Activated CD4-positive, alpha-beta T cell treated with anti-CD3 and anti-CD28 coated beads for 36 hours (primary cell): ENCODE measurements at regions of chr15 and their contacts with region 1.

Region 1: DNA sequence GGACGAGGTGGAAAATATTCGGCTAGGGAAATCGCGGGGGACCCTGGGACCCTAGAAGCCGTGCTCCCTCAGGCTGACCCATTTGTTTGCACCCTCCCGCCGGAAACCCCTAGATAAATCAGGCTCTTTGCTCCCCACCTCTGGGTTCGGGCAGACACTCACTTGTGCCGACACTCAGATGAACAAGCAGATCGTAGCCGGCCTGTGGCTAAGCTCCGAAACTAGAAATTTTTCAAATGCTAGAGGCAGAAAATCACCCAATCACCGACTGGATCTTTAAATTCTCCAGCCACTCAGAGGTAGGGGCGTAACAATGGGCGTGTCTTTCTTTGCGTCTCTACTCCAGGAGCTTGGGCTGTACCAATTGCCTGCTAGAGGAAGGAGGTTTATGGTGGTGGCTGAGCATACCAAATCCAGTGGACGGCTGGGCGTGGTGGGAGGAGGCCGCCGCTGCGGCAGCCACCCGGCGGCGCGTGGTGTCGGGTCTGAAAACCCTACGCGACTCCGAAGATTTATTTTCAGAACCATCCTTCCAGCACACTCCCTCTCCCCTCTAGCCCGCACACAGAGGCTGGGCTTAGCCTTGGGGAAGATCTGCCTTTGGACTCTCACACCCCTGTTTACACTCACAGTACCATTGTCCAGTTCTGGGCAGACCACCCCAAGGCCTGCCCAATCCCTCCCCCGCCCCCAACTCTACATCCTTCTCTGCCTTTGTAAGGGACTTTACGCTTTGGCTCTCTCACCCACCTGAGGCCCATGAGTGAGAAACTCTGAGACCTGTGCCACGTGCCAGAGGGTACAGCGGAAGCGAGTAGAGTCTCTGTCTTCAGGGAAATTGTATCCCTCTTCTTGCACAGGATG is at the start of gene PIF1:
- DNase-seq: peak; percentile 92
- ATAC-seq: peak; percentile 94
- H3K4me3 Mint-ChIP-seq: peak within 1 kb of the TSS; percentile 87
- H3K27ac Mint-ChIP-seq: peak within 1 kb of the TSS; percentile 93
- H3K4me1 Mint-ChIP-seq: peaks cover 23% of the 10 kb centered on the region
- H3K27me3 Mint-ChIP-seq: peaks cover 6% of the 10 kb centered on the region
- total RNA-seq, gene PIF1: 30.0 to 36.3 TPM

Region 2: DNA sequence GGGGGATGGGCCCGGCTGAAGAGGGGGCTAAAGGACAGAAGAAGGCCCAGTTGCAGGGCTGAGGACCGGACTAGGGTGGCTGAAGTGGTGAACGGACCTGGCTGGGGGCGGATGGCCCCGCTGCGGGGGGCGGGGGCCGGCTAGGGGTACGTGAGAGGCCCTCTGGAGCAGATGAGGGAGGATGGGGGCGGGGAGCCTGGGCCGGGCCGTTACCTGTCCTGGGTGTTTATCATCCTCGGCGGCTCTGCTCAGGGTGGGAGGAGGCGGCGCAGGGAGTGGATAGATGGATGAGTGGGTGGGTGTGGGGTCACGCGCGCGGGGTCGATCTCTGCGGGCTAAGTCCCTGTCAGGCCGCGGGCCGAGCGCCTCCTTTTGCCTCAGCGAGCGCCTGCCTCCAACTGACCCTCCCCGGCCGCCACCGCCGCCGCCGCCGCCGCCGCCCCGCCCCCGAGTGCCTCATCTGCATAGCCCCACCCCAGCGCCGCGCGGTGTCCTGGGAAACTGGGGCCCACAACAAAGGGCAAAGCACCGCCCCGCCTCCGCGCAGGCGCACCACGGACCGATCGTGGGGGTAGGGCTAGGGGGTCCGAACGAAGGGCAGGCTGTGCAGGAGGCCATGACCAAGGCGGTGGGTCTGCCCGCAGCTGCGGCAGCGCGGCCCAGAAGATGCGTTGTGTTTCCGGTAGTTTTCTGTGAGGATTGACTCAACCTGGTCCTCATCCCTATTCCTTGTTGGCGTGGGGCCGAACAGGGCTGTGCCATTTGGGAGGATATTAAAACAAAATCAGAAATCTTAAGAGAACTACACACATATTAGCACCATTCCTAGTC is 122.6 kb before region 1 on chr15:
- CTCF ChIA-PET with region 1: no interaction called
- POLR2A ChIA-PET with region 1: no interaction called
- intact Hi-C with region 1: loop called in 1 of 2 experiments (anchors 1 kb)
- DNase-seq: peak; percentile 98
- ATAC-seq: peak; percentile 91
- H3K4me3 Mint-ChIP-seq: peak overlapping the region; percentile 72
- H3K27ac Mint-ChIP-seq: peak overlapping the region; percentile 86
- H3K4me1 Mint-ChIP-seq: peaks cover 52% of the 10 kb centered on the region
- H3K27me3 Mint-ChIP-seq: no peaks in the 10 kb centered on the region

Region 3: GRCh38 chr15:64836023-64836536 is 10.4 kb after region 1 on chr15:
- CTCF ChIA-PET with region 1: interaction called, 17 read pairs
- POLR2A ChIA-PET with region 1: no interaction called
- intact Hi-C with region 1: loop called (anchors 1 kb)
- DNase-seq: no peak
- ATAC-seq: peak; percentile 4
- H3K4me3 Mint-ChIP-seq: peak overlapping the region; percentile 56
- H3K27ac Mint-ChIP-seq: peak overlapping the region; percentile 30
- H3K4me1 Mint-ChIP-seq: peaks cover 43% of the 10 kb centered on the region
- H3K27me3 Mint-ChIP-seq: no peaks in the 10 kb centered on the region

Region 4: DNA sequence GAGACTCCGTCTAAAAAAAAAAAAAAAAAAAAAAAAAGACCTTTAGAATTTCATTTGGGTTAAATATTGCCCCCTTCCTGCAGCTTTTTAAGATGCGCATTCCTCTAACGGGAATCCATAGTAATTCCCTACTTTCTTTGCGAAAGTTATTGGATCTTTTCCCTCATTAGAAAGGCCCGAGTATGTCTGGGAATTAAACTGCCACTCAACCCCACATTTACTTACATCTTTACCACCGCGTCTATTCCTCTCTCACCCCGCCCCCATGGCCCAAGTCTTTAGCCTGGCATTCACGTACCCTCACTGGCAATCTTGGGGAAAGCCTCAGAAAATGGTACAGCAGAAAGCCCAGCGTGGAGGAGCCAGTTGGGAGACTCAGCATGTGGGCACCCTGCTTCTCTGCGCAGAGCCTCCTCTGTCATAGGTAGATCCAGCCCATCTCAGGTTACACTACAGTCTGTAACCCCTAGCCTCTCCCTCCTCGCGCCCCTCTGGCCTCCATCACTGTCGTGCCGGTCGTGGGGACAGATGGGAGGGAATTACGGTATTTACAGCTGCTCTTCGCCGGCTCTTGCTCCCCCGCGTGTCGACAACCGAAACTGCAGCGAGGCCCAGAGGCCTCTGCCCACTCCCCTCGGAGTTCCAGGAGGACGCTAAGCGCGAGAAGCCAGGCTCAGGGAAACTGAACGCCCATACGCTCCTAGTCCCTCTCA is 79.6 kb after region 1 on chr15:
- CTCF ChIA-PET with region 1: interaction called, 5 read pairs
- POLR2A ChIA-PET with region 1: no interaction called
- intact Hi-C with region 1: loop called in 1 of 2 experiments (anchors 1 kb)
- DNase-seq: peak; percentile 91
- ATAC-seq: peak; percentile 87
- H3K4me3 Mint-ChIP-seq: peak overlapping the region; percentile 67
- H3K27ac Mint-ChIP-seq: peak overlapping the region; percentile 87
- H3K4me1 Mint-ChIP-seq: peaks cover 34% of the 10 kb centered on the region
- H3K27me3 Mint-ChIP-seq: peaks cover 6% of the 10 kb centered on the region

Region 5: DNA sequence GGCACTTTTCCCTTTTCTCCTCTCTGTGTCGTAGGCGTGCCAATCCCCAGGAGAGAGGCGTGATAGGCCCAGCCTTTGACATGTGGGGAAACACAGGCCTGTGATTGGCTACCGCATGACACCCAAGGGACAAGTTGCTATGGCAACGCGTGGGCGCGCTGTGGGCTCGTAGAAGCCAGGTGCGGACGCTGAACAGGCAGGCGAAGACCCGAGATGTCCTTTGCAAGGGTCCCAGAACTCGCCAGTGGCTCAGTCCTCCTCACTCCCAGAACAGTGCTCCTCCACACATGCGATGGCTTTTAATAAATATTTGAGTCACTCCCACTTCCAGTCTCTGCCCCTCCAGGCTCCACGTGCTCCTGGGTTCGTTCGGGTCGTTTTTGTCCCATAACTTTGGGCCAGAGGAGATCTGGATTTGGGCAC is 223.8 kb after region 1 on chr15:
- CTCF ChIA-PET with region 1: no interaction called
- POLR2A ChIA-PET with region 1: no interaction called
- intact Hi-C with region 1: loop called in 1 of 2 experiments (anchors 1 kb)
- DNase-seq: peak; percentile 94
- ATAC-seq: peak; percentile 98
- H3K4me3 Mint-ChIP-seq: peak overlapping the region; percentile 8
- H3K27ac Mint-ChIP-seq: no peak overlapping the region
- H3K4me1 Mint-ChIP-seq: peaks cover 16% of the 10 kb centered on the region
- H3K27me3 Mint-ChIP-seq: peaks cover 2% of the 10 kb centered on the region

Region 6: GRCh38 chr15:65233696-65234095 is 408.0 kb after region 1 on chr15:
- CTCF ChIA-PET with region 1: no interaction called
- POLR2A ChIA-PET with region 1: no interaction called
- intact Hi-C with region 1: no loop called
- DNase-seq: no peak
- ATAC-seq: no peak
- H3K4me3 Mint-ChIP-seq: no peak overlapping the region
- H3K27ac Mint-ChIP-seq: no peak overlapping the region
- H3K4me1 Mint-ChIP-seq: peaks cover 3% of the 10 kb centered on the region
- H3K27me3 Mint-ChIP-seq: no peaks in the 10 kb centered on the region